K562 (cell line): ENCODE measurements at regions of chr2 and their contacts with region 1.

Region 1: GRCh38 chr2:189412330-189412953 is 28.8 kb upstream of the WDR75 start:
- DNase-seq: peak; percentile 13 to 43 (median 18)
- ATAC-seq: peak; percentile 71
- H3K4me3 ChIP-seq: no peak overlapping the region
- H3K27ac ChIP-seq: no peak overlapping the region
- H3K4me1 ChIP-seq: no peaks in the 10 kb centered on the region
- H3K27me3 ChIP-seq: no peaks in the 10 kb centered on the region
- CTCF ChIP-seq: peak; percentile 49 to 76 (median 58); a peak in 5 of 6 replicates
- EP300 ChIP-seq: no peak
- POLR2A ChIP-seq: no peak
- RAD21 ChIP-seq: peak; percentile 76 to 78

Region 2: GRCh38 chr2:187499941-187500532 is 1912.4 kb before region 1 on chr2:
- CTCF ChIA-PET with region 1: interaction called, 3 read pairs
- POLR2A ChIA-PET with region 1: no interaction called
- in situ Hi-C with region 1: loop called (anchors 25 kb)
- intact Hi-C with region 1: no loop called
- DNase-seq: peak; percentile 45 to 77 (median 56)
- ATAC-seq: peak; percentile 87
- H3K4me3 ChIP-seq: no peak overlapping the region
- H3K27ac ChIP-seq: no peak overlapping the region
- H3K4me1 ChIP-seq: peaks cover 0 to 12% of the 10 kb centered on the region in 2 experiments; a peak in 3 of 5 replicates
- H3K27me3 ChIP-seq: no peaks in the 10 kb centered on the region
- CTCF ChIP-seq: peak; percentile 71 to 97 (median 84)
- EP300 ChIP-seq: no peak
- POLR2A ChIP-seq: no peak
- RAD21 ChIP-seq: peak; percentile 99 to 100

Region 3: DNA sequence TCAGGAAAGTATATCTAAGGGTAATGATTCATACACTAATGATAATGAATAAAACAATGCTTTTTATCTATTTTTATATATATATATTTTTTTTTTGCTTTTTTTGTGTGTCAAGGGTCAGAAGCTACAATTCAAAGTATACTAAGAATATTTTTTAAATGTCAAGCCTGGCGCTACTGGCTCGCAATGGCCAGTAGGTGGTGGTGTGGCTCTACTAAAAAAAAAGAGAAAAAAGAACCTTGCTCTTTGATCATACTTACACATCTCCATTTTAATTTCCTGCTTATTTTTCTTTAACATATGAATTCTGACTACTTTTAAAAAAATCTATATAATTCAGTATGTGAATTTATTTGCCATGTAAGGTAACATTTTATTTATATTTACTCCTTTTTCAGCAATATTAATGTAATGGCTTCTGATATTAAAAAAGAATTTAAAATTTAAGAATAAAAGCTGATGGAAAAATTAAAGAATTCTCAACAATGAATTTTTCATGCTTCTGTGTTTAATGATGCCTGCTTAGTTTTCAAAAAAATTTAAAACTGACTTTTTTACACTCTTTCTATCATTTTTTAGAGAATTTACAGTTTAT is 887.8 kb before region 1 on chr2:
- CTCF ChIA-PET with region 1: interaction called, 3 read pairs
- POLR2A ChIA-PET with region 1: no interaction called
- in situ Hi-C with region 1: no loop called
- intact Hi-C with region 1: loop called (anchors 2 kb)
- DNase-seq: peak; percentile 13 to 46 (median 16)
- ATAC-seq: peak; percentile 63; the same call in 1 of the 3 replicates
- H3K4me3 ChIP-seq: no peak overlapping the region
- H3K27ac ChIP-seq: no peak overlapping the region
- H3K4me1 ChIP-seq: no peaks in the 10 kb centered on the region
- H3K27me3 ChIP-seq: no peaks in the 10 kb centered on the region
- CTCF ChIP-seq: peak; percentile 33 to 66 (median 34); a peak in 5 of 6 replicates
- EP300 ChIP-seq: no peak
- POLR2A ChIP-seq: no peak
- RAD21 ChIP-seq: peak; percentile 28 to 55; a peak in 2 of 4 replicates

Region 4: GRCh38 chr2:189096769-189097447 is 315.5 kb before region 1 on chr2:
- CTCF ChIA-PET with region 1: interaction called, 7 read pairs
- POLR2A ChIA-PET with region 1: no interaction called
- in situ Hi-C with region 1: no loop called
- intact Hi-C with region 1: loop called (anchors 2 kb)
- DNase-seq: no peak
- ATAC-seq: no peak
- H3K4me3 ChIP-seq: no peak overlapping the region
- H3K27ac ChIP-seq: no peak overlapping the region
- H3K4me1 ChIP-seq: no peaks in the 10 kb centered on the region
- H3K27me3 ChIP-seq: no peaks in the 10 kb centered on the region
- CTCF ChIP-seq: no peak
- EP300 ChIP-seq: no peak
- POLR2A ChIP-seq: no peak
- RAD21 ChIP-seq: no peak

Region 5: DNA sequence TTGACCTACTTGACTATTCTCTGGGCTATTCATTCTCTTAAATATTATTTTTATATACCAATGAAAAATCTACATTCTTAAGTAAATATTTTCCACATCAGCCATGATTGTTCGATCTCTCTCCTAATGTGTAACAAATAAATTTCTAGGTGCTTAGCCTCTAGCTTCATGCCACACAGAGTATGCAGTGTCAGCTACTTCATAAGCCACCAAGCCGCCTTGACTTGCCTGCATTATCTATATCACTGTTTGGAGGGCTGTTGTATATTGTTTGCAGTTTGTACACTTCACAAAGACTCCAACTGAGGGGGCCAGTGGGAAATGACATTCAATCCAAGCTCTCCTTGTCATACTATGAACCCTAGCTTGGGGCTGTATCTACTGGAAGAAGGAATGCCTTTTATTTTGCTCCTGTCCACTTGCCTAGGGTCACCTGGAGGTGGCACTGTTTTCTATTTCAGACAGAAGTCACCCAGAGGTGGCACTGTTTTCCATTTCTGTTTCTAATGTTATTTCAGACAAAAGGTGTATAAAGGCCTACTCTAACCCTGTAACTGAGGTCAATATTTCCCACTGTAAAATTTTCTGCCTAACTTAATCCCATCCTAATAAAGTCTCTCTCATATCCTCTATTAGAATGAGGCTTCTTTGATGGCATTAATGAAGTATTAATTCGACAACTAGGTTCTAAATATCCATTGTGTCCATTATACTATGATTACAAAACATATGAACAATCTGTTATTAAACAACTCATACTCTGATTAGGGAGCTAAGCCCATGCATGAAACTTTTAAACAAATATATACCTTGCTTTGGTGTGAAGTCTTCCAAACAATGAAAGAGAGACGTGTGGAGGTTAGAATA is 269.3 kb before region 1 on chr2:
- CTCF ChIA-PET with region 1: interaction called, 9 read pairs
- POLR2A ChIA-PET with region 1: no interaction called
- in situ Hi-C with region 1: no loop called
- intact Hi-C with region 1: loop called (anchors 5 kb)
- DNase-seq: peak; percentile 24 to 66 (median 32)
- ATAC-seq: peak; percentile 96
- H3K4me3 ChIP-seq: no peak overlapping the region
- H3K27ac ChIP-seq: no peak overlapping the region
- H3K4me1 ChIP-seq: no peaks in the 10 kb centered on the region
- H3K27me3 ChIP-seq: no peaks in the 10 kb centered on the region
- CTCF ChIP-seq: peak; percentile 84 to 99 (median 99)
- EP300 ChIP-seq: no peak
- POLR2A ChIP-seq: no peak
- RAD21 ChIP-seq: peak; percentile 66 to 73

Region 6: GRCh38 chr2:189302274-189302948 is 110.0 kb before region 1 on chr2:
- CTCF ChIA-PET with region 1: no interaction called
- POLR2A ChIA-PET with region 1: no interaction called
- in situ Hi-C with region 1: no loop called
- intact Hi-C with region 1: loop called (anchors 10 kb)
- DNase-seq: no peak
- ATAC-seq: peak; percentile 61
- H3K4me3 ChIP-seq: no peak overlapping the region
- H3K27ac ChIP-seq: no peak overlapping the region
- H3K4me1 ChIP-seq: no peaks in the 10 kb centered on the region
- H3K27me3 ChIP-seq: no peaks in the 10 kb centered on the region
- CTCF ChIP-seq: no peak
- EP300 ChIP-seq: no peak
- POLR2A ChIP-seq: no peak
- RAD21 ChIP-seq: no peak

Region 7: DNA sequence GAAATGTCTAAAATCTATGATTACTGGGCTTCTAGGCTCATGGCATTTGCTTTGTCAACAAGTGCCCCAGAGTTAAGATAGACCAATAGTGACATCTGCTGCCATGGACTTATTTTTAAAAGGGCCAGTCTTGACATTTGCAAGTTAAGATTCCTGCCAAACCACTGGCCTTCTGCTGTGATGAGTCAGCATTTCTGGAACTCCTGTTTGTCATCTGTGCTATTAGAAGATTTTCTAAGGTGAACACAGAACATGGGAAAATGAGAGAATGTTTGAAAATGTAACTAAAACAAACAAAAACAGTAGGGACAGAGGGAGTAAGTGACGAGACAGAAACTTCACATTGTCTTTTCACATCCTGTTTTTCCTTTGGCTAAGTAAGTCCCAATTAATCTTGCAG is 64.9 kb before region 1 on chr2:
- CTCF ChIA-PET with region 1: no interaction called
- POLR2A ChIA-PET with region 1: no interaction called
- in situ Hi-C with region 1: no loop called
- intact Hi-C with region 1: loop called (anchors 2 kb)
- DNase-seq: peak; percentile 25 to 75 (median 46)
- ATAC-seq: peak; percentile 97
- H3K4me3 ChIP-seq: no peak overlapping the region
- H3K27ac ChIP-seq: no peak overlapping the region; the same call in 2 of the 3 replicates
- H3K4me1 ChIP-seq: peaks cover 0 to 7% of the 10 kb centered on the region in 2 experiments; a peak in 2 of 5 replicates
- H3K27me3 ChIP-seq: no peaks in the 10 kb centered on the region
- CTCF ChIP-seq: peak; percentile 45 to 58 (median 58); a peak in 5 of 6 replicates
- EP300 ChIP-seq: no peak
- POLR2A ChIP-seq: no peak
- RAD21 ChIP-seq: peak; percentile 63 to 64

Region 8: GRCh38 chr2:189498205-189498604 is 85.8 kb after region 1 on chr2:
- CTCF ChIA-PET with region 1: no interaction called
- POLR2A ChIA-PET with region 1: no interaction called
- in situ Hi-C with region 1: no loop called
- intact Hi-C with region 1: no loop called
- DNase-seq: no peak
- ATAC-seq: peak; percentile 77
- H3K4me3 ChIP-seq: no peak overlapping the region
- H3K27ac ChIP-seq: no peak overlapping the region
- H3K4me1 ChIP-seq: no peaks in the 10 kb centered on the region
- H3K27me3 ChIP-seq: no peaks in the 10 kb centered on the region
- CTCF ChIP-seq: peak; percentile 9 to 41 (median 29); a peak in 4 of 6 replicates
- EP300 ChIP-seq: no peak
- POLR2A ChIP-seq: no peak
- RAD21 ChIP-seq: peak in 1 of 2 experiments; percentile 54; a peak in 3 of 4 replicates

Region 9: GRCh38 chr2:190996338-190996946 is 1584.0 kb after region 1 on chr2:
- CTCF ChIA-PET with region 1: no interaction called
- POLR2A ChIA-PET with region 1: no interaction called
- in situ Hi-C with region 1: no loop called
- intact Hi-C with region 1: no loop called
- DNase-seq: peak; percentile 31 to 67 (median 54)
- ATAC-seq: peak; percentile 99
- H3K4me3 ChIP-seq: no peak overlapping the region
- H3K27ac ChIP-seq: no peak overlapping the region
- H3K4me1 ChIP-seq: no peaks in the 10 kb centered on the region
- H3K27me3 ChIP-seq: no peaks in the 10 kb centered on the region
- CTCF ChIP-seq: peak; percentile 73 to 97 (median 82)
- EP300 ChIP-seq: no peak
- POLR2A ChIP-seq: no peak
- RAD21 ChIP-seq: peak; percentile 22 to 62; a peak in 2 of 4 replicates